Posterior cingulate gyrus (tissue), 11 donors: ENCODE measurements at regions of chr6 and their contacts with region 1.

Region 1: GRCh38 chr6:153511896-153512496 is 380.9 kb upstream of the RGS17 start:
- DNase-seq: no peak

Region 2: GRCh38 chr6:153032255-153032882 is 479.6 kb before region 1 on chr6:
- intact Hi-C with region 1: loop called (anchors 5 kb)
- DNase-seq: no peak

Region 3: DNA sequence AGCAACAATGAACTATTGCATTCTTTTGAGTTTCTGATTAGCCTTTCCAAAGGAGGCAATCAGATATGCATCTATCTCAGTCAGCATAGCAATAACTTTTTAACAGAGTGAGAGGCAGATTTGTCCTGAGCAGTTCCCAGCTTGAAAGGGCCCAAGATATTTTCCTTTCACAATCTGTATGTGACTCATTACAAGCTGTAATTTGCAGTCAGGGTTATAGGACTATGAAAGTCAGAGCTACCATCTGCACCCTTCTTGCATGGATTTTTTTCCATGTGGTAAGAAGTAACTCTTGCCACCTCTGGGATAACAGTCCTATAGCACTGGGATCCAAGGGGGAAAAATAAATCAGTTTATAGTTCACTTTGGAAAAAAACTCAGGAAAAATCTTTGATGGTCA is 62.7 kb before region 1 on chr6:
- intact Hi-C with region 1: no loop called
- DNase-seq: no peak